GM10248 (cell line): ENCODE measurements at regions of chr6 and their contacts with region 1.

Region 1: GRCh38 chr6:90586836-90587638 is at the start of gene MAP3K7:
- DNase-seq: peak; percentile 83
- CTCF ChIP-seq: no peak

Region 2: DNA sequence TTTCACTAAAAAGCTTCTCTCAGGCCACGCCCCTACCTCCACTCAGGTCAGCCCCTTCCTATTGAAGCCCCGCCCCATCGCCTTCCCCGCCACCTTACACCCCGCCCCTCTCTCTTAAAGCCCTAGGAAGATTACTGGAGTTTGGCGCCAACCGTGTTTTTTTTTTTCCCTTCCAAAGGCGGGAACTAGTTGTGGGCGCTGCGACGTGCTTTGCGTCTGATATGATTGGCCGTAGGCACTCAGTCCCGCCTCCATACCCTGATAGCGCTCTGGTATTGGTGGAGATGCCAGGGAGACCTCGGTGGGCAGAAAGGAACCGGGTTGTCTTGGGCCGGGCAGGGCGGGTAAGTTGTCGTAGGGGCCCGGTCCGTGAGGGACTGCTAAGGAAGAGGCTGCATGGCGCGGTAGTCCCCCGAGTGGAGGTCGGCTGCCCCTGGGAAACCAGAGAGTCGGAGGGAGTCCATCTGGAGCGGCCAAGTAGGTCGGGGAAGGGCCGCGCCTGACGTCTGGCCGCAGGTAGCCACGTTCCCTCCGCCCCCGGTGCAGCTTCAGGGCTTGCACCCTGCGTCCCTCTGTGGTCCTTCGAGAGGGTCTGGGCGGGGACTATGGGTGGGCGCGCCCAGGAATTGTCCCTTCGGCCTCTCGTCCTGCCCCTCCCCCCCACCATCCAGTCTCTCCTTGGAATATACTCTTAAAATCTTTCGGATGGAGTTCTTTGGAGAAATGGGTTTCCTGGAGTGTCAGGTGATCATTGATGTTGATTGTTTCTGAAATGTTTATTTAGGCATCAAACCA is 757.2 kb before region 1 on chr6 and contains the start of gene CASP8AP2:
- CTCF ChIA-PET with region 1: no interaction called
- POLR2A ChIA-PET with region 1: no interaction called
- DNase-seq: peak; percentile 94
- CTCF ChIP-seq: no peak

Region 3: DNA sequence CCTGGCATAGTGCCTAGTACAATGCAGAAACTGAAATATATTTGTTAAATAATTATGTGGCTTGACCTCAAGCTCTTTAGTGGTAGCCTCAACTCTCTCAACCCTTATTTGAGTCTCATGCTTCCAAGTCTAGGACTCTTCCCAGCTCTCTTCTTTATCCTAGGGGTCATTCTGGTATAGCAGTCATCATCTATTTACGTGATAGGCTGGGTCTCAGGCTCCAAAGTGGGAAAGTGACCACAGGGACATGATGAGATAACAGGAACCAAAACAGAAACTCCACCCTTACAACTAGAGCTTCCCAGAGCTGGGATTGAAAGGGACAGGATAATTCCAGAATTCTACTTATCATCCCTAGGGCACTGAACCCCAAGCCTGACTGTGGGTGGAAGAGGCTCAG is 17.5 kb after region 1 on chr6:
- CTCF ChIA-PET with region 1: interaction called, 27 read pairs
- POLR2A ChIA-PET with region 1: no interaction called
- DNase-seq: no peak
- CTCF ChIP-seq: no peak

Region 4: DNA sequence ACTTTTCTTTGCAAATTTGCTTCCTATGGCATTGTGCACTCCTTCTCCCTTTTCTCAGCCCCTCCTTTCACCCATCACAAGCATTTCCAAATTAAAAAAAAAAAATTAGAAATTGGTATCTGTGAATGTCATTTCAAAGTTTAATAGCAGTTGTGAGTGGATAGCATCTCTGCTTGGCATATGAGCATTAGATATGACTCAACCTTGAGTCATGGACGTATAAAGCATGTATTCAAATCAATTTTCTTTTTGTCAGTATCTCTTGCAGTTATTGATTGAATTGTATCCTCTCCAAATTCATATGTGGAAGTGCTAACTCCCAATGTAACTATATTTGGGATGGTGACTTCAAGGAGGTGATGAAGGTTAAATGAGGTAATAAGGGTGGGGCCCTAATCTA is 59.9 kb after region 1 on chr6:
- CTCF ChIA-PET with region 1: no interaction called
- POLR2A ChIA-PET with region 1: no interaction called
- DNase-seq: no peak
- CTCF ChIP-seq: no peak

Region 5: GRCh38 chr6:90818163-90818562 is 231.1 kb after region 1 on chr6:
- CTCF ChIA-PET with region 1: no interaction called
- POLR2A ChIA-PET with region 1: no interaction called
- DNase-seq: no peak
- CTCF ChIP-seq: no peak